ENCODE measurements at regions of chr2 and their contacts with region 1.

Region 1: GRCh38 chr2:24792874-24793760 is at the starts of genes CENPO and PTRHD1:
- DNase-seq: peak; percentile 89 to 97 (median 94)
- ATAC-seq: peak; percentile 96
- H3K4me3 ChIP-seq: peak within 1 kb of the TSS; percentile 92 to 97
- H3K4me3 Mint-ChIP-seq: peak within 1 kb of the TSS; percentile 98
- H3K27ac ChIP-seq: peak within 1 kb of the TSS; percentile 90 to 98
- H3K27ac Mint-ChIP-seq: peak within 1 kb of the TSS; percentile 99
- H3K4me1 ChIP-seq: peaks cover 12% of the 10 kb centered on the region
- H3K4me1 Mint-ChIP-seq: peaks cover 18% of the 10 kb centered on the region
- H3K27me3 ChIP-seq: no peaks in the 10 kb centered on the region
- H3K27me3 Mint-ChIP-seq: no peaks in the 10 kb centered on the region
- CTCF ChIP-seq: peak; percentile 68
- total RNA-seq, gene CENPO: 3.4 to 3.6 TPM
- total RNA-seq, gene PTRHD1: 12.2 to 19.0 TPM

Region 2: GRCh38 chr2:24360050-24360962 is 432.8 kb before region 1 on chr2 and contains the start of gene ITSN2:
- CTCF ChIA-PET with region 1: no interaction called
- POLR2A ChIA-PET with region 1: interaction called, 6 read pairs
- intact Hi-C with region 1: loop called (anchors 1 to 2 kb)
- DNase-seq: peak; percentile 63 to 95 (median 82)
- ATAC-seq: peak; percentile 83
- H3K4me3 ChIP-seq: peak within 1 kb of the TSS; percentile 79 to 94
- H3K4me3 Mint-ChIP-seq: peak within 1 kb of the TSS; percentile 96
- H3K27ac ChIP-seq: peak within 1 kb of the TSS; percentile 93 to 95
- H3K27ac Mint-ChIP-seq: peak within 1 kb of the TSS; percentile 95
- H3K4me1 ChIP-seq: peaks cover 20% of the 10 kb centered on the region
- H3K4me1 Mint-ChIP-seq: peaks cover 31% of the 10 kb centered on the region
- H3K27me3 ChIP-seq: no peaks in the 10 kb centered on the region
- H3K27me3 Mint-ChIP-seq: no peaks in the 10 kb centered on the region
- CTCF ChIP-seq: no peak
- total RNA-seq, gene ITSN2: 86.0 to 89.3 TPM

Region 3: GRCh38 chr2:24490674-24491625 is 302.2 kb before region 1 on chr2 and contains the start of gene NCOA1:
- CTCF ChIA-PET with region 1: no interaction called
- POLR2A ChIA-PET with region 1: interaction called, 11 read pairs
- intact Hi-C with region 1: loop called (anchors 1 kb)
- DNase-seq: peak; percentile 77 to 94 (median 89)
- ATAC-seq: peak; percentile 85
- H3K4me3 ChIP-seq: peak within 1 kb of the TSS; percentile 63 to 72
- H3K4me3 Mint-ChIP-seq: peak within 1 kb of the TSS; percentile 89
- H3K27ac ChIP-seq: peak within 1 kb of the TSS; percentile 70 to 93
- H3K27ac Mint-ChIP-seq: peak within 1 kb of the TSS; percentile 94
- H3K4me1 ChIP-seq: peaks cover 37% of the 10 kb centered on the region
- H3K4me1 Mint-ChIP-seq: peaks cover 53% of the 10 kb centered on the region
- H3K27me3 ChIP-seq: no peaks in the 10 kb centered on the region
- H3K27me3 Mint-ChIP-seq: no peaks in the 10 kb centered on the region
- CTCF ChIP-seq: no peak
- total RNA-seq, gene NCOA1: 32.6 to 33.5 TPM

Region 4: GRCh38 chr2:24920098-24920808 is 127.1 kb after region 1 on chr2 and contains the start of gene ADCY3:
- CTCF ChIA-PET with region 1: interaction called, 3 read pairs
- POLR2A ChIA-PET with region 1: no interaction called
- intact Hi-C with region 1: loop called (anchors 1 to 2 kb)
- DNase-seq: peak; percentile 17 to 81 (median 58)
- ATAC-seq: peak; percentile 62
- H3K4me3 ChIP-seq: peak within 1 kb of the TSS; percentile 46 to 54
- H3K4me3 Mint-ChIP-seq: peak within 1 kb of the TSS; percentile 87
- H3K27ac ChIP-seq: peak within 1 kb of the TSS in 1 of 2 experiments; percentile 33
- H3K27ac Mint-ChIP-seq: peak within 1 kb of the TSS; percentile 77
- H3K4me1 ChIP-seq: peaks cover 35% of the 10 kb centered on the region
- H3K4me1 Mint-ChIP-seq: peaks cover 31% of the 10 kb centered on the region
- H3K27me3 ChIP-seq: no peaks in the 10 kb centered on the region
- H3K27me3 Mint-ChIP-seq: no peaks in the 10 kb centered on the region
- CTCF ChIP-seq: no peak
- total RNA-seq, gene ADCY3: 15.6 to 23.3 TPM

Region 5: DNA sequence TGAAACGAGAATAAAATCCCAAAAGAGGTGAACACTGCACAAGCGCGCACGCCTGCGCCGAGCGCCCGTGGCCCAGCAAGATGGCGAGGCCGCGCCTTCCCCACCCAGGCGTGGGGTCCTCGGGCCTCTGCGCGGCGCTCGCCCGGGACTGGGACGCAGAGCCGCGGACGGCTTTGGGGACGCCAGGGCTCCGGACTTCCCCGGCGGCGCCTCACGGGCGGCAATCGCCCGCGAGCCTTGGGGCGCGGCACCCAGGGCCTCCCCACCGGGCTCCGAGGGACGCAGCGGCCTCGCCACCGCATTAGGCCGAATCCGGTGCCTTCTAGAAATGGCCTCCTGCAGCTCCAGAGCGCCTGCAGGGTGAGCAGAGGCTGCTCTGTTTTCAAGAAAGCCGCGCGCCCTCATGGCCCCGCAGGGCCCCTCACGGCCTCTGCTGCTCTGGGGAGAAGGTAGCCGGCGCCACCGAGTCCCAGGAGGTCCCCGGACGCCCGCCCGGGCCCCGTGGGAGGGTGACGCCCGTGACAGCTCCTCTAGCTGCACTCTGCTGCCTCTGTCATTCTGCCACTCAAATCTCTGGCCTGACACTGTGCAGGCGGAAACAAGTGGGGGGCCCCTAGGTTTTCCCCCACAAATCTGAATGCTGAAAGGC is 411.2 kb after region 1 on chr2:
- CTCF ChIA-PET with region 1: no interaction called
- POLR2A ChIA-PET with region 1: no interaction called
- intact Hi-C with region 1: no loop called
- DNase-seq: peak in 5 of 9 experiments; percentile 19 to 64 (median 26)
- ATAC-seq: peak; percentile 70
- H3K4me3 ChIP-seq: peak overlapping the region in 1 of 2 experiments; percentile 12
- H3K4me3 Mint-ChIP-seq: no peak overlapping the region
- H3K27ac ChIP-seq: no peak overlapping the region
- H3K27ac Mint-ChIP-seq: no peak overlapping the region
- H3K4me1 ChIP-seq: peaks cover 31% of the 10 kb centered on the region
- H3K4me1 Mint-ChIP-seq: peaks cover 32% of the 10 kb centered on the region
- H3K27me3 ChIP-seq: no peaks in the 10 kb centered on the region
- H3K27me3 Mint-ChIP-seq: no peaks in the 10 kb centered on the region
- CTCF ChIP-seq: no peak

Measured in CD8-positive, alpha-beta T cell (primary cell).